Posterior vena cava (tissue), 2 donors: ENCODE measurements at regions of chr3 and their contacts with region 1.

Region 1: GRCh38 chr3:162015856-162016255 is 519.2 kb downstream of the OTOL1 start:
- DNase-seq: no peak

Region 2: DNA sequence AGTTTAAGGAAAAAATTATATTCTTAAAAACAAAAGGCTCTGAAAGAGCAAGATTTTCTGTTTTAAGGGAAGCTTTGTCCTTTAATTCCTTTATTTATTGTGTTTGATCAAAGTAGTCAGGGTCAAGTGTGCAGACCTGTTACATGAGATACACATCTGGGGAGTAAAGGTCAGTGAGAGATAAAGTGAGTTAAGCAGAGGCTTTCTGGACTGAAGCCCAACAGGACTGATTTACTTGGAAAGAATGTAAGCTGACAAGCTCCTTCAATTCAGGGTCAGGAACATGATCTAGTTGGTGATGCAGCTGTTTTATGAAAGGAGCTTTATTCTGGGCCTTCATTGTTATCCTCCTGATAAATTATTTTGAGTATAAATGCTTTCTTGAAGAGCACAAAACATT is 540.0 kb before region 1 on chr3:
- intact Hi-C with region 1: no loop called
- DNase-seq: no peak

Region 3: DNA sequence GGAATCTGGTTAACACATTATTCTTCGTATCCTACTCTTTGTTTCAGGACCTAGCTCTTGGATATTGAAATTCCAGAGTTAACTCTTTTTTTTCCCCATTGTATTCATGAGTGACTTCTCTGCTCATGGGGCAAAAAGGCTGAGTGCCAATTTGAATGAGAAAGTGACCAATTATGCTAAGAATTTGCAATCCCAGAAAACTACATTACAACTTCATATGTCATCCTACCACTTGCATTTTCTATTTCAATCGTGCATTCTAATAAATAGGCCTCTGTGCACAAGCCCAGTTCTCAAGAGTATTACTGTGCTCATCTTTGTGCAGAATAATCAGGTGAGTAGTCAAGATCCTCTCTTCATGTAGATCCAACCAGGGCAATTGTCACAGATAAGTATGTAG is 18.5 kb after region 1 on chr3:
- intact Hi-C with region 1: loop called in 1 of 2 experiments (anchors 1 kb)
- DNase-seq: no peak